ENCODE measurements at regions of chr2 and their contacts with region 1.

Region 1: GRCh38 chr2:190036071-190036470 is 26.5 kb downstream of the MSTN start:
- DNase-seq: no peak
- H3K4me3 ChIP-seq: no peak overlapping the region
- H3K27ac ChIP-seq: no peak overlapping the region
- H3K4me1 ChIP-seq: no peaks in the 10 kb centered on the region; a peak in 1 of 4 replicates
- H3K27me3 ChIP-seq: no peaks in the 10 kb centered on the region
- CTCF ChIP-seq: no peak
- EP300 ChIP-seq: no peak
- RAD21 ChIP-seq: no peak

Region 2: DNA sequence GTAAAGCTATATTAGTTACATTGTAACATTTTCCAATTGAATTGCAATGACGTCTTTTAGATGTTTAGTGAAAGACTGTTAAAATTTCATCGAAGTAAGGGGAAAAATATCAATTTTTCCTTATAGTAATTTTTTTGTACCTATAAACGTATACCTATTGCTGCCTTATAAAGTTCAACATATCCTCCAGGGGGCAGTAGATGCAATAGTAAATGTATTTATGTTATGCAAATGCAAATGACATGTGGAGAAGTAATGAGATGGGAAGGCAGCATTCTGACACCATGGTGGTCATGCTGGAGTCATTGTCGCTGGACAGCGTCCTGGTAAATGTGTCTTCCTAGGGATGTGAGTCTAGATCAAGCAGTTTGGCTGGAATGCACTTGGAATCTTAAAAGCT is 12.2 kb before region 1 on chr2:
- CTCF ChIA-PET with region 1: interaction called, 11 read pairs
- POLR2A ChIA-PET with region 1: no interaction called
- DNase-seq: peak; percentile 27
- H3K4me3 ChIP-seq: no peak overlapping the region
- H3K27ac ChIP-seq: no peak overlapping the region
- H3K4me1 ChIP-seq: no peaks in the 10 kb centered on the region
- H3K27me3 ChIP-seq: no peaks in the 10 kb centered on the region
- CTCF ChIP-seq: peak; percentile 76
- EP300 ChIP-seq: no peak
- RAD21 ChIP-seq: peak; percentile 57

Region 3: GRCh38 chr2:190149908-190150307 is 113.8 kb after region 1 on chr2:
- CTCF ChIA-PET with region 1: no interaction called
- POLR2A ChIA-PET with region 1: no interaction called
- DNase-seq: no peak
- H3K4me3 ChIP-seq: no peak overlapping the region
- H3K27ac ChIP-seq: no peak overlapping the region
- H3K4me1 ChIP-seq: no peaks in the 10 kb centered on the region
- H3K27me3 ChIP-seq: no peaks in the 10 kb centered on the region
- CTCF ChIP-seq: no peak
- EP300 ChIP-seq: no peak
- RAD21 ChIP-seq: no peak

Measured in SK-N-SH (cell line).